Dendritic cell treated with granulocyte-macrophage colony-stimulating factor and Interleukin-4, amounts not matched to agents 40 ng/mL and 50 ng/mL, for 4 days (primary cell): ENCODE measurements at regions of chr9 and their contacts with region 1.

Region 1: DNA sequence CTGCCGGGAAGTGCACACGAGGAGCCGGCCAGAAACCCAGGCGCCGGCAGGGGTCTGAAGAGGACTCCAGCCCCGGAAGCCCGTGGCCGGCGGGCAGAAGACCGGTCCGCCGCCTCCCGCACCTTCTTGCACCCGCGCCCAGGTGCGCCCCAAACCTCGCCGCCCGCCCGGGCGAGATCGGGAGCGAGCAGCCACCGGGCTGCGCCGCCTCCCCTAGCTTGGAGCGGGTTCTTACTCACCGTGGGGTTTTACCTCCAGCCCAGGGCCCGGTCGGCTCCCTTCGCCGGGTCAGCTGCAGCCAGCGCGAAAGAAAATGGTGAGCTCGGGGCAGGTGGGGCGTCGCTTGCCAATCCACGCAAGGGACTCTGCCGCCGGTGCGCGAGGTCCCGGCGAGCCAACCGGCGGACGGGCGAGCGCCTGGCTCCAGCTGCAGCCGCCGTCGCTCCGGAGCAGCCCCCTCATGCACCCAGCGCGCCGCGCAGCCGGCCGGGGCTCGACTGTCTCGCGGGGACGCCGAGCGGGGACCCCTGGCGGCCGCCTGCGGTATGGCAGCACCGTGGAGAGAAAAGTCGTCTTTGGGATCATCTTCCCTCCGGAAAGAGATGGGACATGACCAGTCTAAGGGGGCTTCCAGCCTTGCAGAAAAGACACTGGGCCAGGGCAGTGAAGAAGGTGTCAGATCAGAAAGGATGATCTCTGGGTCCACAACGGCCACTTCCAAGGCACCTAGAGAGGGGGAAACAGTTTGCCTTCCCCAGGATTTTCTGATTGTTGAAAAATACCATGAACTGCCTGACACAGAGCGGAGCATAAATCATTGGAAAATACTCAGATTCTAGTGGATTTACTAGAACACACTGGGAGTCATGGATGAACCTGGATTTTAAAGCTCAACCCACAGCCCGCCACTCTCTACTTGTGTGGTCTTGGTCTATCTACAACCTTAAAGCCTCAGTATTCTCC is at the start of gene MOB3B:
- H3K4me3 Mint-ChIP-seq: peak within 1 kb of the TSS; percentile 91
- H3K27ac Mint-ChIP-seq: peak within 1 kb of the TSS; percentile 97
- H3K4me1 Mint-ChIP-seq: peaks cover 67% of the 10 kb centered on the region
- H3K27me3 Mint-ChIP-seq: no peaks in the 10 kb centered on the region

Region 2: DNA sequence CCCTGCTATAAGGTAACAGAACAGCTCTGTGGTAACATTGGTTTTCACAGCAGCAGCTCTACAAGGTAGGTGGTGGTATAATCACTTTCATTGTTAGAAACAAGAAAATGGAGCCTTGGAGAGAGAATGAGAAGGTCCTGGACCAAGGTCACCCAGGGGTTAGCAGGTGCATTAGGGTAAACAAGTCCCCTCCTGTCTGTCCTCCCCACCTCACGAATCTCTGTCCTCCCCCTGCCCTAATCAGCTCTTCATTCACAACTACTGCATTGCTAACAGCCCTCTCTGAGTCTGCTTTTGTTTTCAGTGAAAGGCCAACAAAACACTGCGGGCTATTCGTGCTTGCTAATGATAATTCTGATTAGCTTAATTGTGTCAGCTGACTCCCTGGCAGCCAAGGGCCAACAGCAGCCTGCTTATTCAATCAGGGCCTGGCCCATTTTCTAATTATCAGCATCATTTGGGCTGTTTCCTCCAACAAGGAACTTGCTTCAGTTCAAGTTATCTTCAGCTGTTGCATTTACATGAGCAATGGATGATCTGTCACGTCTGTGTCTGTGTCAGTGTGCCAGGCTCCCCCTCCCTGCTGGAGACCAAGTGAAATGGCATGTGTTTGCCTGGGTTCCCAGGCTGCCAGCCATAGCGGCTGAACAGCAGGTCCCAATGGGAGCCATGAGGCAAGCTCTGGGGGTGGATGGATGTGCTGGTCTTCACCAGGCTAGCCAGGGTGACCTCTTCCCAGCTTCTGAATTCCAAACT is 175.9 kb before region 1 on chr9:
- intact Hi-C with region 1: loop called (anchors 1 kb)
- H3K4me3 Mint-ChIP-seq: no peak overlapping the region
- H3K27ac Mint-ChIP-seq: peak overlapping the region; percentile 77
- H3K4me1 Mint-ChIP-seq: peaks cover 82% of the 10 kb centered on the region
- H3K27me3 Mint-ChIP-seq: no peaks in the 10 kb centered on the region

Region 3: DNA sequence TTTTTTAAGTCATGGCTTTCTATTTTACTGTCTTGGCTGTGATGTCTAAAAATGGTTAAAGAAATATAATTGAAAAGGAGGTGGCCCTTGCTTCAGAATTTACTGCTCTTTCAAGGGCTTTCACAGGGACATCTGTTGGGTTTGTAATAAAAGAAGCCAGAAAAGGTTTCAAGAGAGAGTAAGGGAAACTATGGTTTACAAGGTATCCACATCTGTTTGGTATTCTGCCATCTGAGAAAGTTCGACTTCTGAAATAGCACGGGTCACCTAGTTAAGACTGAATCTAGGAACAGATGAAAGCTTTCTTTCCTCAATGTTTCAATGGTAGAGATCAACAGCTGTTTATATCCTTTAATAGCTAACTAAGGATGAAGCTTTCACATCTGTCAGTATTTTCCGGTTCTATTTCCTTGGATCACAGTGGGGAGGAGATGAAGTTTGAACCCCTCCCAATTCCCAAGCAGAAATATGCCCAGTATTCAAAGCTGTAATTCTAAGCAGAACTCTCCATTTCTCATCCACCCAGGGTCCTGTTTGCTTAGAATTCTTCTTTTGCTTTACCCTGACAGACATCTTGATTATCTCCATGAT is 78.3 kb before region 1 on chr9:
- intact Hi-C with region 1: loop called (anchors 5 kb)
- H3K4me3 Mint-ChIP-seq: no peak overlapping the region
- H3K27ac Mint-ChIP-seq: peak overlapping the region; percentile 48
- H3K4me1 Mint-ChIP-seq: peaks cover 44% of the 10 kb centered on the region
- H3K27me3 Mint-ChIP-seq: no peaks in the 10 kb centered on the region

Region 4: DNA sequence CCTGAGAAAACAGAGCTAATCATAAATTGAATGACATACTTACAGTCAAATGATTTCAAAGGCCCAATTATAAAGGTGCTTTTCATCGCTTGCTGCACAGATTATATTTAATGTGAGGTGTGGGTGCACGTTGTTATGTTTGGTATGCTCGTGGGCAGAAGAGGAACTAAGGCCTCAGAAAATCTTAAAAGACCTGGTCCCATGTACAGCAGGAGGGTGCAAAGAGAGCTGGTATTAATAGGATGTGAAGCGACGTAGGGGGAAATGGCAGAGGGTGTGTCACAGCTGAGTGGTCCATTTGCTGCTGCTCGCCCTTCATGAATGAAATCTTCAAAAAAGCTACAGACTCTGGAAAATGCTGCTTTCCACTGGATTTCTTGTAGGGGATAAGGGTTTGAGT is 46.0 kb before region 1 on chr9:
- intact Hi-C with region 1: loop called (anchors 5 kb)
- H3K4me3 Mint-ChIP-seq: no peak overlapping the region
- H3K27ac Mint-ChIP-seq: no peak overlapping the region
- H3K4me1 Mint-ChIP-seq: peaks cover 75% of the 10 kb centered on the region
- H3K27me3 Mint-ChIP-seq: no peaks in the 10 kb centered on the region